ENCODE measurements at regions of chr3 and their contacts with region 1.

Region 1: GRCh38 chr3:61561374-61562041 is at the start of gene PTPRG:
- DNase-seq: peak; percentile 88
- H3K4me3 ChIP-seq: peak within 1 kb of the TSS; percentile 51
- H3K27ac ChIP-seq: peak within 1 kb of the TSS; percentile 86
- H3K4me1 ChIP-seq: no peaks in the 10 kb centered on the region
- H3K27me3 ChIP-seq: no peaks in the 10 kb centered on the region
- CTCF ChIP-seq: no peak
- total RNA-seq, gene PTPRG: 26.0 to 26.3 TPM

Region 2: GRCh38 chr3:61650276-61650675 is 88.8 kb after region 1 on chr3:
- intact Hi-C with region 1: loop called (anchors 10 kb)
- DNase-seq: peak; percentile 53
- H3K4me3 ChIP-seq: no peak overlapping the region
- H3K27ac ChIP-seq: no peak overlapping the region
- H3K4me1 ChIP-seq: no peaks in the 10 kb centered on the region
- H3K27me3 ChIP-seq: no peaks in the 10 kb centered on the region
- CTCF ChIP-seq: no peak

Region 3: DNA sequence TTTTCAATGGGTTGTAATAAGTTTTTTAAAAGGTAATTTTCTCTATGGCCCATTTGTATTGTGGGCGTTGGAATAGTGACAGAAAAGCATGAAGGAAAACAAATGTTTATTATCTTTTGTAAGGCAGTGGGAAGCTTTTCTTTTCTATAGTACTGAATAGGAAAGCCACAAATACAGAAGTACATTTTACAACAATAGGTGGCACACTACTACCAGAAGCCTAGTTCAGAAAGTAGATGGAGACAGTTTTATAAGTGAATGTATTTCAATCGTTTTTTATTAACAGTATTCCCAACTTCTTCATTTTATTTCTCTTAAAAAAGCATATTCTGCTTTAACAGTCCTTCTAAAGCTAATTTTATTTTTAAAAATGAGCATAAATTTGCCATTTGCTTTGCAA is 296.5 kb after region 1 on chr3:
- intact Hi-C with region 1: loop called (anchors 5 kb)
- DNase-seq: no peak
- H3K4me3 ChIP-seq: no peak overlapping the region
- H3K27ac ChIP-seq: no peak overlapping the region
- H3K4me1 ChIP-seq: no peaks in the 10 kb centered on the region
- H3K27me3 ChIP-seq: no peaks in the 10 kb centered on the region
- CTCF ChIP-seq: peak; percentile 34

Region 4: GRCh38 chr3:62051507-62051906 is 490.0 kb after region 1 on chr3:
- intact Hi-C with region 1: loop called (anchors 5 kb)
- DNase-seq: peak; percentile 40
- H3K4me3 ChIP-seq: no peak overlapping the region
- H3K27ac ChIP-seq: no peak overlapping the region
- H3K4me1 ChIP-seq: no peaks in the 10 kb centered on the region
- H3K27me3 ChIP-seq: no peaks in the 10 kb centered on the region
- CTCF ChIP-seq: peak; percentile 21

Region 5: DNA sequence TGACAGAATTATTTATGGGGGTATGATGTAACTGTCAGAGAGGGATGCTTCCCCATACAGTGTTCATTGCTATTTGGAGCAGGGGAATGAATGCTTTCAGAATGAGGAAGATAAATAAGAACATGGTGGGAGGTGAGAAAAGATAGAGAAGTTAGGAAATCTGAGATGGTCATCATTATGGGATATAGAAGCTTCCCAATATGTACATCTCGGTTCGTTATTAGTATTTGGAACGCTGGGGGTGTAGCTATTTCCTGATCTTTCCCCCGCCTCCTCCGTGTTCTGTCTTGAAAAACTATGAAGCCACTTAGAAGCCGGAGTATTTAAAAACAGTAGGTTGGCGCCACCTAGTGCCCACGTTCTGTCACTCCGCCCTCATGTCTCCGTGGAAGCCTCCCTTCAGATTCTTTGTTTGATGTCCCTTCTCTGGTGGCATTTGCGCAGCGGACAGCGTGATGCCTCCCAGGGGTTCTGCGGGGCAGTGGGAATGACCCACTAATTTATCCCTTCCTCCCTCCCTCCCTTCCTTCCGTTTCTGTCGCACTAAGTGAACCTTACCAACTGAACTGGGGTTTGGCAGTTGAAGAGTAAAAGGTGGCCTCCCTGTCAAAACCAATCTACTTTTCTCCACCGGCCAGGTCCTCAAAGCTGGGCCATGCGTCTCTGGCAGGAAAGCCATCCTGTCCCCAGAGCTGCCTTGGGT is 627.3 kb after region 1 on chr3:
- intact Hi-C with region 1: loop called (anchors 5 kb)
- DNase-seq: peak; percentile 65
- H3K4me3 ChIP-seq: no peak overlapping the region
- H3K27ac ChIP-seq: no peak overlapping the region
- H3K4me1 ChIP-seq: no peaks in the 10 kb centered on the region
- H3K27me3 ChIP-seq: no peaks in the 10 kb centered on the region
- CTCF ChIP-seq: peak; percentile 66